ENCODE measurements at regions of chr18 and their contacts with region 1.

Region 1: GRCh38 chr18:55589625-55590291 is 1.8 kb upstream of the TCF4 start:
- DNase-seq: peak; percentile 89
- ATAC-seq: peak; percentile 79
- H3K4me3 Mint-ChIP-seq: peak overlapping the region; percentile 75
- H3K27ac Mint-ChIP-seq: peak overlapping the region; percentile 78
- H3K4me1 Mint-ChIP-seq: peaks cover 30% of the 10 kb centered on the region
- H3K27me3 Mint-ChIP-seq: peaks cover 25% of the 10 kb centered on the region

Region 2: GRCh38 chr18:55415258-55415871 is 174.4 kb before region 1 on chr18:
- CTCF ChIA-PET with region 1: no interaction called
- POLR2A ChIA-PET with region 1: no interaction called
- intact Hi-C with region 1: loop called (anchors 5 kb)
- DNase-seq: peak; percentile 89
- ATAC-seq: peak; percentile 74
- H3K4me3 Mint-ChIP-seq: no peak overlapping the region
- H3K27ac Mint-ChIP-seq: no peak overlapping the region
- H3K4me1 Mint-ChIP-seq: peaks cover 5% of the 10 kb centered on the region
- H3K27me3 Mint-ChIP-seq: peaks cover 4% of the 10 kb centered on the region

Region 3: DNA sequence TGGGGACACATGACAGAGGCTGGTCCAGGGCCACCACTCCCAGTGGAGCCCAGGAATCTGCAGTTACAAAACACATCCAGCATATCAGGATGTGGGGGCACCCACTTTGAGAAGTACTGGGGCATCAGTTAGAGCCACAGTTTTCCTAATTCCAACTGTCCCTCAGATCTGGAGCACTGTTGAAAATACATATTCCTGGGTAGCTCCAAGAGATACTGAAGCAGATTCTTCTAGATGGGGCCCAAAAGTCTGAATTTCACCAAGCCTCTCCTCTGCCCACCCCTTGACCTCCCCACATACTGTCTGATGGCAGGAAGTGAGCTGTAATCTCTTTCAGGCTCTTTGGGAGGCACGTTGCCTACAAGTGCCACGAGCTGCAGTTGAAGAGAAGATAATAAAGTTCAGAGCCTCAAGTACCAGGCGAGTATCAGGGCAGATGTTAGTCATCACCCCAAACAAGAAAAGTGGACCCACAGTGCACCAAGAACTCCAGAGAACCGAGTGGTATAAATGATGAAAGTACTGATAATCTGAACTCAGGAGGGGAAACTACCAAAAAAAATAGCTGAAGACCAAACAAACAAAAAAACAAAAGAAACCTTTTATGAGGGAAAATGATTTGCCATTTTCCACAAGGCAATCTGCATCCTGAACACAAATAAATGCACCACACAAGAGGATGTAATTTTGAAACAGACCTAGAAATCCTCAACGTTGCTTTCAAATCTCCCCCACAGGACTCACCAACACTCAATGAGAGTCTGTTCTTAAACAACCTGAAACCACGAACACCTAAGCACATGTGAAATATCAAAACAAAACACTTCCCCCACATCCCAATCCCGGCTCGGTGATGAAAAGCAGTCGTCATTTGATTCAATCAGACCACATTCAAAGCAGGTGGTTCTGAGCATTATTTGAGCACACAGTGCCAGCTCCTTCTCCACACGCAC is 100.4 kb before region 1 on chr18:
- CTCF ChIA-PET with region 1: no interaction called
- POLR2A ChIA-PET with region 1: no interaction called
- intact Hi-C with region 1: loop called (anchors 1 to 5 kb)
- DNase-seq: peak; percentile 65
- ATAC-seq: peak; percentile 89
- H3K4me3 Mint-ChIP-seq: peak overlapping the region; percentile 1
- H3K27ac Mint-ChIP-seq: peak overlapping the region; percentile 76
- H3K4me1 Mint-ChIP-seq: peaks cover 25% of the 10 kb centered on the region
- H3K27me3 Mint-ChIP-seq: peaks cover 30% of the 10 kb centered on the region

Region 4: GRCh38 chr18:55781481-55781957 is 191.8 kb after region 1 on chr18:
- CTCF ChIA-PET with region 1: no interaction called
- POLR2A ChIA-PET with region 1: no interaction called
- intact Hi-C with region 1: loop called (anchors 1 to 10 kb)
- DNase-seq: peak; percentile 6
- ATAC-seq: no peak
- H3K4me3 Mint-ChIP-seq: no peak overlapping the region
- H3K27ac Mint-ChIP-seq: no peak overlapping the region
- H3K4me1 Mint-ChIP-seq: peaks cover 13% of the 10 kb centered on the region
- H3K27me3 Mint-ChIP-seq: peaks cover 44% of the 10 kb centered on the region

Region 5: GRCh38 chr18:56112013-56112749 is 522.4 kb after region 1 on chr18:
- CTCF ChIA-PET with region 1: no interaction called
- POLR2A ChIA-PET with region 1: no interaction called
- intact Hi-C with region 1: loop called in 1 of 2 experiments (anchors 5 kb)
- DNase-seq: peak; percentile 55
- ATAC-seq: peak; percentile 98
- H3K4me3 Mint-ChIP-seq: peak overlapping the region; percentile 4
- H3K27ac Mint-ChIP-seq: peak overlapping the region; percentile 41
- H3K4me1 Mint-ChIP-seq: peaks cover 6% of the 10 kb centered on the region
- H3K27me3 Mint-ChIP-seq: peaks cover 18% of the 10 kb centered on the region

Region 6: GRCh38 chr18:56638271-56639093 is 1048.7 kb after region 1 on chr18 and contains the start of gene TXNL1:
- CTCF ChIA-PET with region 1: no interaction called
- POLR2A ChIA-PET with region 1: no interaction called
- intact Hi-C with region 1: loop called in 1 of 2 experiments (anchors 2 kb)
- DNase-seq: peak; percentile 100
- ATAC-seq: peak; percentile 98
- H3K4me3 Mint-ChIP-seq: peak within 1 kb of the TSS; percentile 98
- H3K27ac Mint-ChIP-seq: peak within 1 kb of the TSS; percentile 96
- H3K4me1 Mint-ChIP-seq: peaks cover 41% of the 10 kb centered on the region
- H3K27me3 Mint-ChIP-seq: no peaks in the 10 kb centered on the region
- total RNA-seq, gene TXNL1: 75.3 to 87.0 TPM

Region 7: GRCh38 chr18:57434536-57435494 is 1845.1 kb after region 1 on chr18 and contains the start of gene ONECUT2:
- CTCF ChIA-PET with region 1: no interaction called
- POLR2A ChIA-PET with region 1: no interaction called
- intact Hi-C with region 1: loop called in 1 of 2 experiments (anchors 10 kb)
- DNase-seq: peak; percentile 89
- ATAC-seq: peak; percentile 89
- H3K4me3 Mint-ChIP-seq: peak within 1 kb of the TSS; percentile 64
- H3K27ac Mint-ChIP-seq: no peak within 1 kb of the TSS
- H3K4me1 Mint-ChIP-seq: peaks cover 53% of the 10 kb centered on the region
- H3K27me3 Mint-ChIP-seq: peaks cover 77% of the 10 kb centered on the region
- total RNA-seq, gene ONECUT2: under 0.01 TPM in 1 of 2 experiments, not detected in the other

Measured in activated CD4-positive, alpha-beta T cell treated with anti-CD3 and anti-CD28 coated beads for 36 hours (primary cell).